Panc1 (cell line): ENCODE measurements at regions of chr5 and their contacts with region 1.

Region 1: GRCh38 chr5:66972004-66972403 is 224.6 kb downstream of the CD180 start:
- DNase-seq: no peak
- ATAC-seq: no peak
- H3K4me3 ChIP-seq: no peak overlapping the region
- H3K27ac ChIP-seq: no peak overlapping the region
- H3K4me1 ChIP-seq: no peaks in the 10 kb centered on the region
- H3K27me3 ChIP-seq: no peaks in the 10 kb centered on the region
- CTCF ChIP-seq: no peak

Region 2: DNA sequence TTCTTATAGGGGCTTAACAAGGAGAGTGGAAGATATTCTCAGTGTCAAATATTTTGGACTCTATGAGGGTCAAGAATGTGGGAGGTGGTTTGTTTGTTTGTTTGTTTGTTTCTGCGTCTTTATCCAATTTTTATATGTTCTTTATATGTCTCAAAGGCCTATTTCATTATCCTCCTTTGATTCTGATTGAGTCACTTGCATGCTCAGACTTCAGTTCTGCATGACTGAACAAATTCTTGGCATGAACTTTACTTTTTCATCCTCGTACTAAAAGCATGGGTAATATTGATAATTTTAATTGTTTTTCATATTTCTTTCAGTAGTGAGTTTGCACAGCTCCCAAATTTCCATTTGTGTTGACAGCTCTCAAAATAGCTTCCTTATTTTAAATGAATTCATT is 1064.9 kb before region 1 on chr5:
- CTCF ChIA-PET with region 1: no interaction called
- POLR2A ChIA-PET with region 1: interaction called, 13 read pairs
- in situ Hi-C with region 1: no loop called
- intact Hi-C with region 1: no loop called
- DNase-seq: no peak
- ATAC-seq: no peak
- H3K4me3 ChIP-seq: no peak overlapping the region
- H3K27ac ChIP-seq: no peak overlapping the region
- H3K4me1 ChIP-seq: no peaks in the 10 kb centered on the region
- H3K27me3 ChIP-seq: no peaks in the 10 kb centered on the region
- CTCF ChIP-seq: no peak